HepG2 (cell line): ENCODE measurements at regions of chr13 and their contacts with region 1.

Region 1: GRCh38 chr13:49300739-49301589 is 53.2 kb downstream of the CDADC1 start:
- DNase-seq: peak; percentile 77
- ATAC-seq: peak; percentile 67
- H3K4me3 ChIP-seq: peak overlapping the region; percentile 53 to 70 (median 53); a peak in 5 of 6 replicates
- H3K27ac ChIP-seq: no peak overlapping the region
- H3K4me1 ChIP-seq: peaks cover 88% of the 10 kb centered on the region
- H3K27me3 ChIP-seq: no peaks in the 10 kb centered on the region
- CTCF ChIP-seq: peak; percentile 93
- EP300 ChIP-seq: no peak
- POLR2A ChIP-seq: no peak
- RAD21 ChIP-seq: peak; percentile 81

Region 2: DNA sequence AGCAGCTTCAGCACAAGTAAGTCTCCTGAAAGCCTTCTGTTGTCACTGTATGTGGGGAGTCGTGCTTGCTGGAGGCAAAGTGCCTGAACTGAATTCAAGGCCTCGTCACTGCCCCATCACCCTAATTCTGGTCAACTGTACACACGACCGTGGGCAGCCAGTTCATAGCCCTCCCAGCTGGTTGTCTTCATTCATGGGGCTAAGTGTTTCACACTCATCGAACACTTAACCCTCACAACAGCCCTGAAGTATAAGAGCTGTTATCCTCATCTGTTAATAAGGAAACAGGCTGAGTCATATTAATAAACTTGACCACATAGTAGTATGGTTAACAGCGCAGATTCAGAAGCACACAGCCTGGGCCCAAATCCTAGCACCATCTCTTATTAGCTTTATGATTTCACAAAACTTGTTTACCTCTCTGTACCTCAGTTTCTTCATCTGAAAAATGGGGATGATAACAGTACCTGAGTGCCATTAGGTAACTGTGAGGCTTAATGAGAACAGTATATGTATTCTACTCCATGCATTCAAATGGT is 13.4 kb after region 1 on chr13:
- CTCF ChIA-PET with region 1: no interaction called
- POLR2A ChIA-PET with region 1: interaction called, 5 read pairs
- in situ Hi-C with region 1: no loop called
- intact Hi-C with region 1: loop called (anchors 2 kb)
- DNase-seq: no peak
- ATAC-seq: no peak
- H3K4me3 ChIP-seq: peak overlapping the region in 2 of 3 experiments; percentile 1 to 58; a peak in 4 of 6 replicates
- H3K27ac ChIP-seq: peak overlapping the region; percentile 51
- H3K4me1 ChIP-seq: peaks cover 18% of the 10 kb centered on the region
- H3K27me3 ChIP-seq: no peaks in the 10 kb centered on the region
- CTCF ChIP-seq: no peak
- EP300 ChIP-seq: no peak
- POLR2A ChIP-seq: no peak
- RAD21 ChIP-seq: no peak

Region 3: GRCh38 chr13:49374585-49375290 is 73.8 kb after region 1 on chr13:
- CTCF ChIA-PET with region 1: no interaction called
- POLR2A ChIA-PET with region 1: no interaction called
- in situ Hi-C with region 1: loop called (anchors 5 kb)
- intact Hi-C with region 1: loop called (anchors 5 kb)
- DNase-seq: no peak
- ATAC-seq: no peak
- H3K4me3 ChIP-seq: no peak overlapping the region
- H3K27ac ChIP-seq: no peak overlapping the region
- H3K4me1 ChIP-seq: peaks cover 31% of the 10 kb centered on the region
- H3K27me3 ChIP-seq: no peaks in the 10 kb centered on the region
- CTCF ChIP-seq: no peak
- EP300 ChIP-seq: no peak
- POLR2A ChIP-seq: no peak
- RAD21 ChIP-seq: no peak

Region 4: GRCh38 chr13:49421391-49421790 is 120.4 kb after region 1 on chr13:
- CTCF ChIA-PET with region 1: interaction called, 5 read pairs
- POLR2A ChIA-PET with region 1: no interaction called
- in situ Hi-C with region 1: loop called (anchors 10 kb)
- intact Hi-C with region 1: loop called (anchors 1 kb)
- DNase-seq: peak; percentile 81
- ATAC-seq: peak; percentile 100
- H3K4me3 ChIP-seq: no peak overlapping the region
- H3K27ac ChIP-seq: no peak overlapping the region
- H3K4me1 ChIP-seq: peaks cover 28% of the 10 kb centered on the region
- H3K27me3 ChIP-seq: no peaks in the 10 kb centered on the region
- CTCF ChIP-seq: peak; percentile 97
- EP300 ChIP-seq: no peak
- POLR2A ChIP-seq: no peak
- RAD21 ChIP-seq: peak; percentile 93

Region 5: DNA sequence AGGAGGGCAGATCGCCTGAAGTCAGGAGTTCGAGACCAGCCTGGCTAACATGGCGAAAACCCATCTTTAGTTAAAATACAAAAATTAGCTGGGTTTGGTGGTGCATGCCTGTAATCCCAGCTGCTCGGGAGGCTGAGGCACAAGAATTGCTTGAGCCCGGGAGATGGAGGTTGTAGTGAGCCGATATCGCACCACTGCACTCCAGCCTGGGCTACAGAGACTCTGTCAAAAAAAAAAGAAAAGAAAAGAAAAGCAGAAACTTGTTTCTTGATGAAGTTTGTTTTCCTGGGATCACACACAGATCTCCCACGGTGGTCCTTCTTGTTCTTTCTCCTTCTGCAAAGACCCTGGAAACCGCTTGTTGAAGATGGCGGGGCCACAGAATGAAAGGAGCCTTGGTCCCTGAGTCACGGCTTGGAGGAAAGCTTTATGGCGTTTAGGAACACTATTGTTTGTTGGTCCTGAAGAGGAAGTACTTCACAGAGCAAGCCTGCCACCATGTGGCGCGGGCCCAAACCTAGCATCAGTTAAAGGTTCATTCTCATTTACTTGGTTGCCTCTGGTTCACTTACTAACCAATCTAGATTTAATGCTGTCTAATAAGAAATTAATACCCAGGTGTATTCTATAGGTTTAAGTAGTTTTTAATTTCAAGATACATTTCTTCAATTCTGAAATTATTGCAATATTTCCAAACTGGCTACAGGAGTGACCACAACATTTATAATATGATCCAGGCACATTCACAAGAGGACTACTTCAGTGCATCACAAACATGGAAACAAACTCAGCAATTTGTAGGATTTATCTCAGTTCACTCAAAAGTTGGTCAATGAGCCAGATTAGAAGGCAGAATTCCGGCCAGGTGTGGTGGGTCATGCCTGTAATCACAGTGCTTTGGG is 306.0 kb after region 1 on chr13:
- CTCF ChIA-PET with region 1: interaction called, 7 read pairs
- POLR2A ChIA-PET with region 1: interaction called, 3 read pairs
- in situ Hi-C with region 1: loop called (anchors 5 kb)
- intact Hi-C with region 1: loop called (anchors 1 kb)
- DNase-seq: peak; percentile 77
- ATAC-seq: peak; percentile 96
- H3K4me3 ChIP-seq: peak overlapping the region; percentile 31 to 67 (median 62); a peak in 5 of 6 replicates
- H3K27ac ChIP-seq: no peak overlapping the region
- H3K4me1 ChIP-seq: peaks cover 32% of the 10 kb centered on the region
- H3K27me3 ChIP-seq: no peaks in the 10 kb centered on the region
- CTCF ChIP-seq: peak; percentile 91
- EP300 ChIP-seq: no peak
- POLR2A ChIP-seq: no peak
- RAD21 ChIP-seq: peak; percentile 88